Activated CD8-positive, alpha-beta T cell treated with anti-CD3 and anti-CD28 coated beads, Interleukin-2, amount 10 ng/mL, durations not matched to agents 7 days and 5 days (primary cell): ENCODE measurements at regions of chr2 and their contacts with region 1.

Region 1: DNA sequence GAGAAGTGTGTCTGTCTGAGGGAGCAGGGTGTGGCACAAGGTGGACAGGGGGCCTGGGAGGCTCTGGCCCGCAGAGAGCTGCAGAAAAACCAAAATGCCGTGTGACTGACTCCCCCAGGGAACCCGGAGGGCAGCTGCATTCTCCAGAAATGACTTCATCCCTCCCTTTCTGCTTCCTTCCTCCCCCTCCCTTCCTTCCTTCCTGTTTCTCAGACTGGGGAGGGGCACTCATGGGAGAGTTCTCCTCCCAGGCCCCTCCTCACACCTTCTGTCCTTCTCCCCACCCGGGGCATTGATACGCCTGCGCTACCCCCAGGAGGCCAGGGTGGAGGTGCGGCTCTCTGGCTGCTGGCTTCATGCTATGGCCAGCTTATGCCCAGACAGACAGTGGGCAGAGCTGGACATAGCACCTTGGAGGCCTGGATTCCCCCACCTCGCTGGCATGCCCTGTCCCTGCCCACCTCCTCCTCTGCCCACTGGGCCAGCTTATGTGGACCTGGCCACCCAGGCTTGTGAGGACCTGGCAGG is 8.2 kb upstream of the GPR17 start:
- DNase-seq: no peak
- ATAC-seq: no peak
- H3K4me3 Mint-ChIP-seq: peak overlapping the region; percentile 38
- H3K27ac Mint-ChIP-seq: peak overlapping the region; percentile 89
- H3K4me1 Mint-ChIP-seq: peaks cover 57% of the 10 kb centered on the region
- H3K27me3 Mint-ChIP-seq: no peaks in the 10 kb centered on the region

Region 2: DNA sequence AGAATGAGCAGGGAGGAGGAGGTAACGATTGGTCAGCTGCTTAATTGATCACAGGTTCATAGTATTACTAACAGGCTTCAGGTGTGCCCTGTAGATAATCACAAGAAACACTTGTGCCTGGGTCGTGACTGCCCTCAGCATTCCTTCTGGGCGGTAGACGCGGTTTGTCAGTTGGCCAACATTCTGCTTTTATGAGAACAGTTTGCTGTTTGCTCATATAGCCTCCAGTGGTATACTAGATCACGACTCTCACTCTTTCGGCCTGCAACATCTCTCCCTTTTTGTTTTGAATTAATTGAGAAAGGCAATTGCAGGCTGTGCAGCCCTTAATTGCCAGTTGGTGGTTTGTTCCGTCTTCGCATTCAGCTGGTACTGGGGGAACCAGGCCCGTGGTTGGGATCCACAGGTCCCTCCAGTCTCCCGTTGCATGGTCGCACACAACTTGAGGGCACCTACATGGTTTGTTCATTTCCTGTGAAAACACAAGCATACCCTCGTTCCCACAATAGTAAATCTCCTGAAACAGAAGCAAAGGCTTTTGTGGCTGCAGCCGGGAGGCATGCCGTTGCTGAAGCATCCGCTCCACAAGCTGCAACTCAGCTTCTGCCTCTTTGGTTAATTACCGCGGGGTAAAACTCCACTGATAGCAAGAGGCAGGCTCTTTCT is 22.2 kb before region 1 on chr2:
- CTCF ChIA-PET with region 1: no interaction called
- POLR2A ChIA-PET with region 1: no interaction called
- DNase-seq: peak; percentile 39
- ATAC-seq: peak; percentile 55
- H3K4me3 Mint-ChIP-seq: peak overlapping the region; percentile 20
- H3K27ac Mint-ChIP-seq: peak overlapping the region; percentile 58
- H3K4me1 Mint-ChIP-seq: peaks cover 18% of the 10 kb centered on the region
- H3K27me3 Mint-ChIP-seq: peaks cover 35% of the 10 kb centered on the region

Region 3: DNA sequence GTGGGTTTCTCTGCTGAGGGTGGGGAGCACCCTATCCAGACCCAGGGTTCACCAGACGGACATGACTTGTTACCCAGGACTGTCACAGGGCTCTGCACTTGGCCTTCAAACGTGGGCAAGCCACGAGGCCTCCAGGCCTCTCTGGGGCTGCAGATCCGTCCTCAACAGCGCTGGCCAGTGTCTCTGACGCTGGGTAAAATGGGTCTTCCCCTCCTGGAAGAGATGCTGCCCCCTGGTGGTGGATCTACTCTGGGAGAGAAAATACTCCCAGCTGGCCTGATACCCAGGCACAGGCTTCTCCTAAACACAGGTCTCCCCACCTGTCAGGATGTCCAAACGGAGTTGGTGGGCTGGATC is 11.9 kb after region 1 on chr2:
- CTCF ChIA-PET with region 1: interaction called, 25 read pairs
- POLR2A ChIA-PET with region 1: interaction called, 5 read pairs
- DNase-seq: peak; percentile 91
- ATAC-seq: peak; percentile 87
- H3K4me3 Mint-ChIP-seq: peak overlapping the region; percentile 38
- H3K27ac Mint-ChIP-seq: peak overlapping the region; percentile 64
- H3K4me1 Mint-ChIP-seq: peaks cover 18% of the 10 kb centered on the region
- H3K27me3 Mint-ChIP-seq: no peaks in the 10 kb centered on the region

Region 4: GRCh38 chr2:127701193-127701650 is 63.4 kb after region 1 on chr2 and contains the start of gene SFT2D3:
- CTCF ChIA-PET with region 1: interaction called, 3 read pairs
- POLR2A ChIA-PET with region 1: interaction called, 13 read pairs
- DNase-seq: peak; percentile 93
- ATAC-seq: peak; percentile 83
- H3K4me3 Mint-ChIP-seq: peak within 1 kb of the TSS; percentile 84
- H3K27ac Mint-ChIP-seq: peak within 1 kb of the TSS; percentile 95
- H3K4me1 Mint-ChIP-seq: peaks cover 41% of the 10 kb centered on the region
- H3K27me3 Mint-ChIP-seq: no peaks in the 10 kb centered on the region
- total RNA-seq, gene SFT2D3: 4.8 to 5.5 TPM